ENCODE measurements at regions of chr7 and their contacts with region 1.

Region 1: GRCh38 chr7:78510580-78511188 is 712.1 kb downstream of the PHTF2 start:
- DNase-seq: peak; percentile 67
- ATAC-seq: peak; percentile 82
- H3K4me3 ChIP-seq: no peak overlapping the region
- H3K27ac ChIP-seq: no peak overlapping the region
- H3K4me1 ChIP-seq: no peaks in the 10 kb centered on the region
- H3K27me3 ChIP-seq: no peaks in the 10 kb centered on the region
- CTCF ChIP-seq: peak; percentile 79
- POLR2A ChIP-seq: no peak
- RAD21 ChIP-seq: peak; percentile 88

Region 2: DNA sequence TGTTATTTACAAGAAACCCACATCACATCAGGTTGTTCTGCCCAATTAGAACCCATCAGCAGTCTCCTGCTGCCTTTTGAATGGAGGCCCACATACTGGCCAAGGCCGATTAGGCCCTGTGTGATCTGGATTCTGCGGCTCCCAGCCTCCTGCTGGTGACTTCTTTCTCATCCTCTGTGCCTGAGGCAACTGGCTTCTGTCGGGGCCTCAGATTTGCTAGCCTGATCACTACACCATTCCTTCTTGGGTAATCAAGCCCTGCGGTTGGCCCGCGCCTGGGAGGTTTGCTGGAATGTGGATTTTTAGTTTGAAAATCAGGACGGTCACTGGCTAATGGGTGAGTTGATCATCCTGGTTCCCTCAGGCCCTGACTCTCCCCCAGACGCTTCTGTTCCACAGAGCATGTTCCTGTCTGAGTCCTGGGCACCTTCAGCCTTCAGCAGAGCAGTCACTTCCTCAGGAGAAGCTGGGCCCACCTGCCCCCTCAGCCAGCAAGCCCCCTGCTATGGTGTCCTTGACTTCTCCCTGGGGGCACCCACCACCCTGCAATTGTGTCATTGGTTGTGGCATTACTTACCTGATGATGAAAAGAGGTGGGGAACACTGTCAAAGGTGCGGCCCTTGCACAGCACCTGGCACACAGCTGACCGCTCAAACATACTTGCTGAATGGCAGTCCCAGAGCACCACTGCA is 504.5 kb before region 1 on chr7:
- CTCF ChIA-PET with region 1: no interaction called
- POLR2A ChIA-PET with region 1: no interaction called
- dilution Hi-C with region 1: no loop called
- in situ Hi-C with region 1: no loop called
- intact Hi-C with region 1: no loop called
- DNase-seq: no peak
- ATAC-seq: no peak
- H3K4me3 ChIP-seq: no peak overlapping the region
- H3K27ac ChIP-seq: no peak overlapping the region
- H3K4me1 ChIP-seq: no peaks in the 10 kb centered on the region
- H3K27me3 ChIP-seq: no peaks in the 10 kb centered on the region
- CTCF ChIP-seq: no peak
- POLR2A ChIP-seq: no peak
- RAD21 ChIP-seq: no peak

Region 3: GRCh38 chr7:78924581-78924980 is 413.9 kb after region 1 on chr7:
- CTCF ChIA-PET with region 1: interaction called, 3 read pairs
- POLR2A ChIA-PET with region 1: no interaction called
- dilution Hi-C with region 1: no loop called
- in situ Hi-C with region 1: loop called (anchors 10 kb)
- intact Hi-C with region 1: loop called (anchors 1 kb)
- DNase-seq: peak; percentile 43
- ATAC-seq: no peak
- H3K4me3 ChIP-seq: no peak overlapping the region
- H3K27ac ChIP-seq: no peak overlapping the region
- H3K4me1 ChIP-seq: no peaks in the 10 kb centered on the region
- H3K27me3 ChIP-seq: no peaks in the 10 kb centered on the region
- CTCF ChIP-seq: peak; percentile 45
- POLR2A ChIP-seq: no peak
- RAD21 ChIP-seq: peak; percentile 59

Region 4: DNA sequence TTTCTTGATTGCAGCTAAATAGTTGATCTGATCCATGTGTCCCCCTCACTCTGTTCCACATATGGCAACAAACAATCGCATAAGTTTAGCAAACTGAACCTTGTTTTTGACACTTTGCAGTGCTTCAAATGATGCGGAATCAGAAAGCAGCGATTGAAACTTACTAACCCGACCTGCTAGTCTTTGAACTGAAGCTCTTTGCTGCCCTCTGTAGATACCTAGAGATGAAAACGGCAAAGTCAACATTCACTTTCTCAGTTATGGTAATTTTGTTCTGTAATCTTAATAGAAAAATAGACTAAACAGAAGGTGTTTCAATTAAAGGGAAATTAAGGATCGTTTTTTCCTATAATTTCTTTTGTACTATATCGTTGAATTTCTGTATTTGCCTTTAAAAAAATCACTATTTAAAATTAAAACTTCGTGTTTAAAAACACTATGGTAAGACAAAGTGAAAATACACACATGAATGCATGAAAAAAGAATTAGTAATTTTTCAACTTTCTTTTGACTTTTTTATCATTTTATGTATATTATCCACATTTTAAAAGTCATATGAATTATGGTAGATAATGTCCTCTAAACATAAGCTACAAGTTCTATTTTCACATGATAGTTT is 666.3 kb after region 1 on chr7:
- CTCF ChIA-PET with region 1: interaction called, 6 read pairs
- POLR2A ChIA-PET with region 1: no interaction called
- dilution Hi-C with region 1: no loop called
- in situ Hi-C with region 1: loop called (anchors 10 kb)
- intact Hi-C with region 1: loop called (anchors 2 kb)
- DNase-seq: peak; percentile 68
- ATAC-seq: peak; percentile 80
- H3K4me3 ChIP-seq: no peak overlapping the region
- H3K27ac ChIP-seq: no peak overlapping the region
- H3K4me1 ChIP-seq: no peaks in the 10 kb centered on the region; the same call in 1 of the 2 replicates
- H3K27me3 ChIP-seq: no peaks in the 10 kb centered on the region
- CTCF ChIP-seq: peak; percentile 70
- POLR2A ChIP-seq: no peak
- RAD21 ChIP-seq: peak; percentile 81

Region 5: GRCh38 chr7:79282063-79282694 is 771.5 kb after region 1 on chr7:
- CTCF ChIA-PET with region 1: interaction called, 3 read pairs
- POLR2A ChIA-PET with region 1: no interaction called
- dilution Hi-C with region 1: no loop called
- in situ Hi-C with region 1: no loop called
- intact Hi-C with region 1: loop called (anchors 5 kb)
- DNase-seq: peak; percentile 86
- ATAC-seq: peak; percentile 38
- H3K4me3 ChIP-seq: no peak overlapping the region; the same call in 1 of the 2 replicates
- H3K27ac ChIP-seq: peak overlapping the region; percentile 54
- H3K4me1 ChIP-seq: peaks cover 19% of the 10 kb centered on the region
- H3K27me3 ChIP-seq: no peaks in the 10 kb centered on the region
- CTCF ChIP-seq: peak; percentile 58
- POLR2A ChIP-seq: no peak
- RAD21 ChIP-seq: peak; percentile 56

Measured in IMR-90 (cell line).